ENCODE measurements at regions of chr9 and their contacts with region 1.

Region 1: GRCh38 chr9:33721674-33722358 is 73.5 kb upstream of the PRSS3 start:
- DNase-seq: peak; percentile 91
- ATAC-seq: peak; percentile 88
- H3K4me3 Mint-ChIP-seq: no peak overlapping the region
- H3K27ac Mint-ChIP-seq: no peak overlapping the region
- H3K4me1 Mint-ChIP-seq: no peaks in the 10 kb centered on the region
- H3K27me3 Mint-ChIP-seq: peaks cover 5% of the 10 kb centered on the region
- CTCF ChIP-seq: peak; percentile 100

Region 2: GRCh38 chr9:33638391-33638915 is 83.4 kb before region 1 on chr9:
- CTCF ChIA-PET with region 1: interaction called, 16 read pairs
- POLR2A ChIA-PET with region 1: no interaction called
- intact Hi-C with region 1: no loop called
- DNase-seq: no peak
- ATAC-seq: no peak
- H3K4me3 Mint-ChIP-seq: no peak overlapping the region
- H3K27ac Mint-ChIP-seq: no peak overlapping the region
- H3K4me1 Mint-ChIP-seq: no peaks in the 10 kb centered on the region
- H3K27me3 Mint-ChIP-seq: peaks cover 49% of the 10 kb centered on the region
- CTCF ChIP-seq: no peak

Region 3: GRCh38 chr9:33649463-33649862 is 72.4 kb before region 1 on chr9:
- CTCF ChIA-PET with region 1: interaction called, 18 read pairs
- POLR2A ChIA-PET with region 1: no interaction called
- intact Hi-C with region 1: no loop called
- DNase-seq: peak; percentile 55
- ATAC-seq: peak; percentile 56
- H3K4me3 Mint-ChIP-seq: no peak overlapping the region
- H3K27ac Mint-ChIP-seq: no peak overlapping the region
- H3K4me1 Mint-ChIP-seq: peaks cover 11% of the 10 kb centered on the region
- H3K27me3 Mint-ChIP-seq: peaks cover 21% of the 10 kb centered on the region
- CTCF ChIP-seq: no peak

Region 4: DNA sequence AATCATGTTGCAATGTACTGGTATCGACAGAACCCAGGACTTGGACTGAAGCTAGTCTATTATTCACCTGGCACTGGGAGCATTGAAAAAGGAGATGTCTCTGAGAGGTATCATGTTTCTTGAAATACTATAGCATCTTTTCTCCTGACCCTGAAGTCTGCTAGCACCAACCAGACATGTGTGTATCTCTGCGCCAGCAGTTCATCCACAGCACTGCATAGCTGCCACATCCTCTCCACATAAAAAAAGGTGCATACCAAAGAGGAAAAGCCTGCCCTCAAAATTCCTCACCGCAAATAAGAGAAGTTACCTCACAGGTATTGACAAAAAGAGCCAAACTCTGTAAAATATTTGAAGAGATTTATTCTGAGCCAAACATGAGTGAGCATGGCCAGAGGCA is 26.0 kb before region 1 on chr9:
- CTCF ChIA-PET with region 1: interaction called, 15 read pairs
- POLR2A ChIA-PET with region 1: no interaction called
- intact Hi-C with region 1: no loop called
- DNase-seq: no peak
- ATAC-seq: no peak
- H3K4me3 Mint-ChIP-seq: no peak overlapping the region
- H3K27ac Mint-ChIP-seq: no peak overlapping the region
- H3K4me1 Mint-ChIP-seq: peaks cover 10% of the 10 kb centered on the region
- H3K27me3 Mint-ChIP-seq: peaks cover 21% of the 10 kb centered on the region
- CTCF ChIP-seq: no peak

Region 5: GRCh38 chr9:33748633-33749304 is 27.0 kb after region 1 on chr9:
- CTCF ChIA-PET with region 1: interaction called, 10 read pairs
- POLR2A ChIA-PET with region 1: no interaction called
- intact Hi-C with region 1: no loop called
- DNase-seq: peak; percentile 83
- ATAC-seq: peak; percentile 76
- H3K4me3 Mint-ChIP-seq: peak overlapping the region; percentile 74
- H3K27ac Mint-ChIP-seq: peak overlapping the region; percentile 56
- H3K4me1 Mint-ChIP-seq: peaks cover 36% of the 10 kb centered on the region
- H3K27me3 Mint-ChIP-seq: peaks cover 53% of the 10 kb centered on the region
- CTCF ChIP-seq: no peak

Region 6: DNA sequence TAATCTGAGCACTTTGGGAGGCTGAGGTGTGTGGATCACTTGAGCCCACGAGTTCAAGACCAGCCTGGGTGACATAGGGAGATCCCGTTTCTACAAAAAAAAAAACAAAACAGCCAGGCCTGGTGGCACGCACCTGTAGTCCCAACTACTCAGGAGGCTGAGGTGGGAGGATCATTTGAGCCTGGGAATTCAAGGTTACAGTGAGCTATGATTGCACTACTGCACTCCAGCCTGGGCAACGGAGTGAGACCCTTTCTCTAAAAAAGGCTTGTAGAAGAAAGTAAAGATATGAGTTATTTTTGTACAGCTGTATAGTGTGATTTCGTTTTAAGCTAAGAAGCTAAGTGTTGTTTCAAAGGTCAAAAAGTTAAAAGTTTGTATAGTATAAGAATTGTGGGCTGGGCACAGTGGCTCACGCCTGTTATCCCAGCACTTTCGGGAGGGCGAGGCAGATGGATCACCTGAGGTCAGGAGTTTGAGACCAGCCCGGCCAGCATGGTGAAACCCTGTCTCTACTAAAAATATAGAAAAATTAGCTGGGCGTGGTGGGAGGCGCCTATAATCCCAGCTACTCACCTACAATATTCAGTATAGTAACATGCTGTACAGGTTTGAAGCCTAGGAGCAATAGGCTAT is 113.9 kb after region 1 on chr9:
- CTCF ChIA-PET with region 1: no interaction called
- POLR2A ChIA-PET with region 1: no interaction called
- intact Hi-C with region 1: no loop called
- DNase-seq: no peak
- ATAC-seq: peak; percentile 14
- H3K4me3 Mint-ChIP-seq: no peak overlapping the region
- H3K27ac Mint-ChIP-seq: peak overlapping the region; percentile 25
- H3K4me1 Mint-ChIP-seq: peaks cover 39% of the 10 kb centered on the region
- H3K27me3 Mint-ChIP-seq: no peaks in the 10 kb centered on the region
- CTCF ChIP-seq: no peak

Measured in activated CD8-positive, alpha-beta T cell treated with anti-CD3 and anti-CD28 coated beads for 36 hours (primary cell).